ENCODE measurements at regions of chr6 and their contacts with region 1.

Region 1: GRCh38 chr6:27809939-27810767 is 102.0 kb downstream of the OR2B2 start:
- DNase-seq: peak; percentile 98
- ATAC-seq: peak; percentile 57
- H3K4me3 ChIP-seq: peak overlapping the region; percentile 76 to 84 (median 79)
- H3K27ac ChIP-seq: peak overlapping the region; percentile 89
- H3K4me1 ChIP-seq: peaks cover 54% of the 10 kb centered on the region
- H3K27me3 ChIP-seq: no peaks in the 10 kb centered on the region; a peak in 1 of 5 replicates
- CTCF ChIP-seq: peak; percentile 65
- EP300 ChIP-seq: peak in 1 of 2 experiments; percentile 33; a peak in 1 of 4 replicates
- POLR2A ChIP-seq: peak; percentile 99 to 100
- RAD21 ChIP-seq: peak; percentile 58

Region 2: GRCh38 chr6:26031595-26032339 is 1778.4 kb before region 1 on chr6:
- CTCF ChIA-PET with region 1: no interaction called
- POLR2A ChIA-PET with region 1: interaction called, 4 read pairs
- in situ Hi-C with region 1: loop called (anchors 10 kb)
- intact Hi-C with region 1: no loop called
- DNase-seq: peak; percentile 100
- ATAC-seq: peak; percentile 79
- H3K4me3 ChIP-seq: peak overlapping the region; percentile 71 to 83 (median 82)
- H3K27ac ChIP-seq: peak overlapping the region; percentile 93
- H3K4me1 ChIP-seq: peaks cover 37% of the 10 kb centered on the region
- H3K27me3 ChIP-seq: no peaks in the 10 kb centered on the region; a peak in 1 of 5 replicates
- CTCF ChIP-seq: peak; percentile 52
- EP300 ChIP-seq: peak; percentile 40 to 80; a peak in 2 of 4 replicates
- POLR2A ChIP-seq: peak; percentile 99
- RAD21 ChIP-seq: peak; percentile 61

Region 3: GRCh38 chr6:27795697-27796494 is 14.3 kb before region 1 on chr6:
- CTCF ChIA-PET with region 1: no interaction called
- POLR2A ChIA-PET with region 1: interaction called, 47 read pairs
- in situ Hi-C with region 1: no loop called
- intact Hi-C with region 1: no loop called
- DNase-seq: peak; percentile 95
- ATAC-seq: peak; percentile 30
- H3K4me3 ChIP-seq: peak overlapping the region in 1 of 3 experiments; percentile 24; a peak in 1 of 6 replicates
- H3K27ac ChIP-seq: peak overlapping the region; percentile 34
- H3K4me1 ChIP-seq: peaks cover 48% of the 10 kb centered on the region
- H3K27me3 ChIP-seq: no peaks in the 10 kb centered on the region
- CTCF ChIP-seq: peak; percentile 84
- EP300 ChIP-seq: peak in 1 of 2 experiments; percentile 31; a peak in 1 of 4 replicates
- POLR2A ChIP-seq: no peak
- RAD21 ChIP-seq: peak; percentile 76

Region 4: GRCh38 chr6:27825025-27825793 is 15.1 kb after region 1 on chr6:
- CTCF ChIA-PET with region 1: no interaction called
- POLR2A ChIA-PET with region 1: interaction called, 81 read pairs
- in situ Hi-C with region 1: no loop called
- intact Hi-C with region 1: loop called (anchors 2 kb)
- DNase-seq: no peak
- ATAC-seq: peak; percentile 11; the same call in 2 of the 3 replicates
- H3K4me3 ChIP-seq: peak overlapping the region; percentile 66 to 88 (median 75)
- H3K27ac ChIP-seq: peak overlapping the region; percentile 78
- H3K4me1 ChIP-seq: peaks cover 33% of the 10 kb centered on the region
- H3K27me3 ChIP-seq: no peaks in the 10 kb centered on the region; a peak in 1 of 5 replicates
- CTCF ChIP-seq: no peak
- EP300 ChIP-seq: no peak
- POLR2A ChIP-seq: no peak
- RAD21 ChIP-seq: no peak

Region 5: DNA sequence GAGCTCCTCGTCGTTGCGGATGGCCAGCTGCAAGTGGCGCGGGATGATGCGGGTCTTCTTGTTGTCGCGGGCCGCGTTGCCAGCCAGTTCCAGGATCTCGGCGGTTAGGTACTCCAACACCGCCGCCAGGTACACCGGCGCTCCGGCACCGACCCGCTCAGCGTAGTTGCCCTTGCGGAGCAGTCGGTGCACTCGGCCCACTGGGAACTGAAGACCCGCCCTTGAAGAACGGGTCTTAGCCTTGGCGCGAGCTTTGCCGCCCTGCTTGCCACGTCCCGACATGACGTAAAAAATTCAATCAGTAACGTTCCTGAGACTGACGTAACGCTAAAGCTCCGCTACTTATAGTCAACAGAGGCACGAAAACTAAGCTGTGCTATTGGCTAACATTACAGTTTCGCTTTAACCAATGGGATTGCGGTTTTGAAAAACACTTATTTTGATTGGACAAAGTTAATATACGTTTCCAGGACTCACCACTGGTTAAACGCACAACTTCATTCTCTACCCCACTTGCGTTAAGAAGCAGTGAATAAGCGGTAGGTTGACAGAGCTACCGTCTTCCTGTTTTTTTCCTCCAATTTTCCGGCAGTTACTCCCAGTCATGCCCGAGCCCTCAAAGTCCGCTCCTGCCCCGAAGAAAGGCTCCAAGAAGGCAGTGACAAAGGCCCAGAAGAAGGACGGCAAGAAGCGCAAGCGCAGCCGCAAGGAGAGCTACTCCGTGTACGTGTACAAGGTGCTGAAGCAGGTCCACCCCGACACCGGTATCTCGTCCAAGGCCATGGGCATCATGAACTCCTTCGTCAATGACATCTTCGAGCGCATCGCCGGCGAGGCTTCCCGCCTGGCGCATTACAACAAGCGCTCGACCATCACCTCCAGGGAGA is 28.1 kb after region 1 on chr6:
- CTCF ChIA-PET with region 1: no interaction called
- POLR2A ChIA-PET with region 1: interaction called, 197 read pairs
- in situ Hi-C with region 1: no loop called
- intact Hi-C with region 1: loop called (anchors 1 kb)
- DNase-seq: peak; percentile 100
- ATAC-seq: peak; percentile 87
- H3K4me3 ChIP-seq: peak overlapping the region; percentile 79 to 84 (median 83)
- H3K27ac ChIP-seq: peak overlapping the region; percentile 92
- H3K4me1 ChIP-seq: peaks cover 34% of the 10 kb centered on the region
- H3K27me3 ChIP-seq: no peaks in the 10 kb centered on the region; a peak in 1 of 5 replicates
- CTCF ChIP-seq: no peak
- EP300 ChIP-seq: 0 out of 4 replicates have a peak, but pooled peaks of 1 of the 2 experiments have one; percentile 6
- POLR2A ChIP-seq: peak; percentile 82 to 99
- RAD21 ChIP-seq: no peak; the same call in 1 of the 2 replicates

Region 6: GRCh38 chr6:27940766-27941165 is 130.6 kb after region 1 on chr6:
- CTCF ChIA-PET with region 1: no interaction called
- POLR2A ChIA-PET with region 1: no interaction called
- in situ Hi-C with region 1: no loop called
- intact Hi-C with region 1: no loop called
- DNase-seq: no peak
- ATAC-seq: no peak
- H3K4me3 ChIP-seq: no peak overlapping the region
- H3K27ac ChIP-seq: no peak overlapping the region
- H3K4me1 ChIP-seq: no peaks in the 10 kb centered on the region
- H3K27me3 ChIP-seq: no peaks in the 10 kb centered on the region
- CTCF ChIP-seq: no peak
- EP300 ChIP-seq: no peak
- POLR2A ChIP-seq: no peak
- RAD21 ChIP-seq: no peak

Region 7: GRCh38 chr6:27962506-27962905 is 152.4 kb after region 1 on chr6:
- CTCF ChIA-PET with region 1: no interaction called
- POLR2A ChIA-PET with region 1: no interaction called
- in situ Hi-C with region 1: no loop called
- intact Hi-C with region 1: no loop called
- DNase-seq: no peak
- ATAC-seq: no peak
- H3K4me3 ChIP-seq: no peak overlapping the region
- H3K27ac ChIP-seq: no peak overlapping the region
- H3K4me1 ChIP-seq: no peaks in the 10 kb centered on the region
- H3K27me3 ChIP-seq: no peaks in the 10 kb centered on the region
- CTCF ChIP-seq: no peak
- EP300 ChIP-seq: no peak
- POLR2A ChIP-seq: no peak
- RAD21 ChIP-seq: no peak

Region 8: GRCh38 chr6:28053584-28053983 is 243.4 kb after region 1 on chr6:
- CTCF ChIA-PET with region 1: no interaction called
- POLR2A ChIA-PET with region 1: no interaction called
- in situ Hi-C with region 1: no loop called
- intact Hi-C with region 1: no loop called
- DNase-seq: no peak
- ATAC-seq: no peak
- H3K4me3 ChIP-seq: no peak overlapping the region
- H3K27ac ChIP-seq: no peak overlapping the region
- H3K4me1 ChIP-seq: no peaks in the 10 kb centered on the region
- H3K27me3 ChIP-seq: peaks cover 0 to 7% of the 10 kb centered on the region in 2 experiments; a peak in 1 of 5 replicates
- CTCF ChIP-seq: no peak
- EP300 ChIP-seq: no peak
- POLR2A ChIP-seq: no peak
- RAD21 ChIP-seq: no peak

Region 9: GRCh38 chr6:28080631-28081485 is 270.7 kb after region 1 on chr6:
- CTCF ChIA-PET with region 1: no interaction called
- POLR2A ChIA-PET with region 1: no interaction called
- in situ Hi-C with region 1: no loop called
- intact Hi-C with region 1: loop called (anchors 5 kb)
- DNase-seq: peak; percentile 95
- ATAC-seq: peak; percentile 95
- H3K4me3 ChIP-seq: peak overlapping the region; percentile 77 to 89 (median 87)
- H3K27ac ChIP-seq: peak overlapping the region; percentile 78
- H3K4me1 ChIP-seq: peaks cover 34% of the 10 kb centered on the region
- H3K27me3 ChIP-seq: no peaks in the 10 kb centered on the region; a peak in 1 of 5 replicates
- CTCF ChIP-seq: peak; percentile 28
- EP300 ChIP-seq: peak in 1 of 2 experiments; percentile 61; a peak in 1 of 4 replicates
- POLR2A ChIP-seq: peak; percentile 55 to 56; a peak in 3 of 4 replicates
- RAD21 ChIP-seq: peak; percentile 57; the same call in 1 of the 2 replicates

Measured in HepG2 (cell line).